CD4-positive, alpha-beta memory T cell (primary cell): ENCODE measurements at regions of chr3 and their contacts with region 1.

Region 1: GRCh38 chr3:48685602-48686511 is at the start of gene NCKIPSD:
- DNase-seq: peak; percentile 87 to 94 (median 90)
- H3K4me3 ChIP-seq: peak within 1 kb of the TSS; percentile 59 to 82
- H3K4me3 Mint-ChIP-seq: peak within 1 kb of the TSS; percentile 87 to 99 (median 94)
- H3K27ac ChIP-seq: peak within 1 kb of the TSS; percentile 77
- H3K27ac Mint-ChIP-seq: peak within 1 kb of the TSS; percentile 81 to 94 (median 92)
- H3K4me1 ChIP-seq: peaks cover 34% of the 10 kb centered on the region
- H3K4me1 Mint-ChIP-seq: peaks cover 17 to 49% (median 27%) of the 10 kb centered on the region in 4 donors
- H3K27me3 ChIP-seq: no peaks in the 10 kb centered on the region
- H3K27me3 Mint-ChIP-seq: no peaks in the 10 kb centered on the region
- total RNA-seq, gene NCKIPSD: 20.1 to 21.7 TPM

Region 2: DNA sequence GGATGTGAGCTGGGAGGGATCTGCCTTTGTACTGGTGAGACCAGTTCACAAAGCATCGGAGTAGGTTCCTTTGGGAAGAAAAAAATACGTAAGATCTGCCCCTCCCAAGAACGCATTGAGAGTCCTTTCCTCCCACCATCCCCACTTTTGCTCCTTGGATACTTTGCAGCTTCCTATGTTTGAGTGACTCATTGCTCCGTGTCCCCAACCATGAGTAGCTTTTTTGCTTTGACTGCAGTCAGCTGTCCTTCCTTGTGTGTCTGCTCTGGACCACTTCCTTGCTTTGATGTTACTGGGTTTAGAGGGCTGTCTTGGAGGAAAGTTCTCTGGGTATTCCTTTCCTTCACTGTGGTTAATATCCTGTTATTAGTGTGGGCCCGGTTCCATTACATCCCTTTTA is 1348.2 kb before region 1 on chr3:
- CTCF ChIA-PET with region 1: no interaction called
- POLR2A ChIA-PET with region 1: no interaction called
- intact Hi-C with region 1: no loop called
- DNase-seq: no peak
- H3K4me3 ChIP-seq: no peak overlapping the region
- H3K4me3 Mint-ChIP-seq: no peak overlapping the region
- H3K27ac ChIP-seq: no peak overlapping the region
- H3K27ac Mint-ChIP-seq: peak overlapping the region in 3 of 7 donors; percentile 5 to 65 (median 38)
- H3K4me1 ChIP-seq: no peaks in the 10 kb centered on the region
- H3K4me1 Mint-ChIP-seq: no peaks in the 10 kb centered on the region
- H3K27me3 ChIP-seq: no peaks in the 10 kb centered on the region
- H3K27me3 Mint-ChIP-seq: no peaks in the 10 kb centered on the region

Region 3: DNA sequence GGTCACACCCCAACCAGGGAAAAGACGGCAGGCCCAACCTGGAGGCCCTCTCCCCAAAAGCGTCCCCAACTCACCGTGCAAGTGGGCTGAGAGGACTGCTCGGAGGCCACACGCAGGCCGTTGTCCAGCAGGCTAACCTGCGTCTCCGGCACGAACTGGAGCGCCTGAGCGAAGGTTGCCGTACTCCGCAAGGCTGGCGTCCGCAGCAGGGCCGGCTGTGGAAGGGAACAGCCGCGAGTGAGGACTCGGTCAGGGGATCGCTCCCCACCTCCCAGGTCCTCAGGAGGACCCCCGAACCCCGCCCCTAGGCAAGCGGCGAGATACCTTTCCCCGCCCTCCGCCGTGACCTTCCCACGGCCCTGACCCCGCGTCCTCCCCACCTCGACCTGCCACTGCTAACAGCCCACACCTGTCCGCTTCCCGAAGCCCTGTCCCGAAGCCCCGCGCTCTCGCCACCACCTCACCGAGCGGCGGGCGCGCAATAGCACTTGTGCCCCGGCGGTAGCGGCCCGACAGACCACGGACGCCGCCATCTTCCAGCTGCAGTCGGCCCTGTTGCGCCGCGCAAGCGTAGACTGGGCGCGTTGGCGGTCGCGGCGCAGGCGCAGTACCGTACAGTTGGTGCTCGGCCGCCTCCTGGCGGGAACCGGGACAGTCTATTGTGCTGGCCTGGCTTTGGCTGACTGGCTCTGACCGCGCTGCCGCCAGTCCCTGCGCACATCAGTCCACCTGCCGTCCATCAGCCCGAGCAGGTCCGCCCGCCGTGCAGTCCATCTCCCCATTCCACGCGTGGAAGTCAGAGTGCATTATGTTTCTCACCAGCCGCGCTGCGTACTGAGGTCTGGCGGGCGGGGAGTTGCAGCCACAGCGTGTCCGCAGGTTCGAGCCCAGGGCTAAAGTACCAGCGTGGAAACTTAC is 76.5 kb before region 1 on chr3 and contains the start of gene UQCRC1:
- CTCF ChIA-PET with region 1: interaction called, 3 read pairs
- POLR2A ChIA-PET with region 1: interaction called, 3 read pairs
- intact Hi-C with region 1: loop called (anchors 1 kb)
- DNase-seq: peak; percentile 87 to 94 (median 93)
- H3K4me3 ChIP-seq: peak within 1 kb of the TSS; percentile 76 to 83
- H3K4me3 Mint-ChIP-seq: peak within 1 kb of the TSS; percentile 93 to 100 (median 98)
- H3K27ac ChIP-seq: peak within 1 kb of the TSS; percentile 89
- H3K27ac Mint-ChIP-seq: peak within 1 kb of the TSS; percentile 95 to 100 (median 98)
- H3K4me1 ChIP-seq: peaks cover 10% of the 10 kb centered on the region
- H3K4me1 Mint-ChIP-seq: peaks cover 12 to 24% (median 19%) of the 10 kb centered on the region in 4 donors
- H3K27me3 ChIP-seq: no peaks in the 10 kb centered on the region
- H3K27me3 Mint-ChIP-seq: no peaks in the 10 kb centered on the region
- total RNA-seq, gene UQCRC1: 73.7 to 91.3 TPM

Region 4: GRCh38 chr3:48716982-48717746 is 31.3 kb after region 1 on chr3 and contains the start of gene IP6K2:
- CTCF ChIA-PET with region 1: interaction called, 6 read pairs
- POLR2A ChIA-PET with region 1: interaction called, 11 read pairs
- intact Hi-C with region 1: loop called (anchors 1 kb)
- DNase-seq: peak; percentile 95 to 99 (median 97)
- H3K4me3 ChIP-seq: peak within 1 kb of the TSS; percentile 90 to 98
- H3K4me3 Mint-ChIP-seq: peak within 1 kb of the TSS; percentile 98 to 100 (median 99)
- H3K27ac ChIP-seq: peak within 1 kb of the TSS; percentile 91
- H3K27ac Mint-ChIP-seq: peak within 1 kb of the TSS; percentile 88 to 99 (median 99)
- H3K4me1 ChIP-seq: peaks cover 44% of the 10 kb centered on the region
- H3K4me1 Mint-ChIP-seq: peaks cover 28 to 51% (median 37%) of the 10 kb centered on the region in 4 donors
- H3K27me3 ChIP-seq: no peaks in the 10 kb centered on the region
- H3K27me3 Mint-ChIP-seq: no peaks in the 10 kb centered on the region
- total RNA-seq, gene IP6K2: 84.5 to 91.8 TPM

Region 5: DNA sequence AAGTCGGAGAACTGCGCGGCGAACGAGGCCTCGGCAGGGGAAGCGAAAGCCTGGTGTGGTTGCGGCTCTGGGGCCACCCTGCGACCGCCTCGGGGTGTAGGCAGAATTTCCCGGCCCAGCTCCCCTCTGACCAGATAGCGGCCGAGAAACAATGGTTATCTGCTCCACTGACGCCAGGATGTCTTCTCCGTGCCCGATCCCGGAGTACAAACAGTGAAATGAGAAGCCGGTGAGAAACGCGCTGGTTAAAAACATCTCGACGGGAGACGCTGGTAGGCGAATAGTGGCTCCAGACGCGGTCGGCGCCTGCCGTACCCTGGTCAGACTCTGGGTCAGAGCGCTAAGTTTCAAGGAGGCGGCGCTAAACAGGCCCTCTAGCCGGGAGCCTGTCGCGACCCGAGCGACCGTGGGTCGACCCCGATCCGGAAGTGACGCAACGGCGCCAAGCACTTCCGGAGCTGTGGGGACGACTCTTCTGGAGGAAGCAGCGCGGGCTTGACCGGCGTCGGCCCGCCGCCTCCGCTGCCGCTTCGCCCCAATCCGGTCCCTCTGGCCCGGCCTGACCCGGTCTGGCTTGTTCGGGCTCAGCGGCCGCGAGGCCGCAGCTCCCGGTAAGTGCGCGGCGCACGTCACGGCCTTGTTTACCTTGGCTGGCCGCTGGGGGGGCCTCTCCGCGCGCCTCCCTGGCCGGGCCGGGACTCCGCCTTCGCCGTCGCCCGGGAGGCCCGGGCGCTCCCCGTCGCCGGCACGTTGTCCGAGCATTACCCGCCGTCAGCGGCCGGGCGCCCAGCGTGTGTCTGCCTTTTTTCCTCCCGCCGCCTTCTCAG is 232.7 kb after region 1 on chr3 and contains the start of gene ARIH2:
- CTCF ChIA-PET with region 1: no interaction called
- POLR2A ChIA-PET with region 1: interaction called, 4 read pairs
- intact Hi-C with region 1: loop called (anchors 10 kb)
- DNase-seq: peak; percentile 87 to 90 (median 88)
- H3K4me3 ChIP-seq: peak within 1 kb of the TSS; percentile 81 to 96
- H3K4me3 Mint-ChIP-seq: peak within 1 kb of the TSS; percentile 89 to 97 (median 95)
- H3K27ac ChIP-seq: peak within 1 kb of the TSS; percentile 93
- H3K27ac Mint-ChIP-seq: peak within 1 kb of the TSS; percentile 97 to 100 (median 98)
- H3K4me1 ChIP-seq: peaks cover 29% of the 10 kb centered on the region
- H3K4me1 Mint-ChIP-seq: peaks cover 11 to 37% (median 23%) of the 10 kb centered on the region in 4 donors
- H3K27me3 ChIP-seq: no peaks in the 10 kb centered on the region
- H3K27me3 Mint-ChIP-seq: no peaks in the 10 kb centered on the region
- total RNA-seq, gene ARIH2: 141 to 149 TPM